ENCODE measurements at regions of chr14 and their contacts with region 1.

Region 1: DNA sequence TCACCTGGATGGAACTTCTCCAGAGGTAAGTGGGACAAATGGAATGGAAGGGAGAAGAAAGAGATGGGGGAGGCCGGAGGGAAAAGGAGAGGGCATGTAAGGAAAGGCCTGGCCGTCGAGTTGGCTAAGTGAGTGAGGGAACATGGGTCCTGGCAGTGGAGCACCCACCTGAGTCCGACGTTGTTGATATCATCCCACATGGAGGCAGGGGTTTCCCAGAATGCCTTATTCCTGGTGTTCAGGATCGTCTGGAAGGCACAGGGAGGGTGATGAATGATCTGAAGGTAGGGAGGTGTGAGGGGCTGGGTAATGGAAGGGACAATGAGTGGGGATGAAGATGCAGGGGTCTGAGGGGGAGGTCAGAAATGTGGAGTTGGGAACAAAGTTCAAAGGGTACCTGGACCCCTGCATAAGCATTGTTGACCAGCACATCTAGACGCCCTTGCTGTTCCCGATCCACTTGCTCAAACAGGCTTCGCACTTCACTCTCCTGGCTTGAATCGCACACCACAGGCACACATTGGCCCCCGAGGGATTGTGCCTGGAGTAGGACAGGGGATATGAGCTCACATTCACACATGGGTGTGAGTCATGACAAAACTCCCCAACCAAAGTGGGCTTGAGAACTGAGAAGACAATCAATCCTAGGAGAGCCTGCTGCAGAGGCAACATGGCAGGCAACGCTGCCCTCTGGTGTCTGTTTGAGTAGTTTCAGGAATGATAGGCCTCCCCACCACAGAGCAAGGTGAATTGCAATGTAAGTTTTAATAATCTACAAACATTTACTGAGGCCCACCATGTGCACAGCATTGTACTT is 3.0 kb downstream of the DHRS1 start:
- DNase-seq: peak; percentile 70
- ATAC-seq: peak; percentile 62

Region 2: GRCh38 chr14:24241829-24242443 is 54.6 kb before region 1 on chr14:
- intact Hi-C with region 1: loop called (anchors 2 kb)
- DNase-seq: peak; percentile 94
- ATAC-seq: peak; percentile 95

Region 3: GRCh38 chr14:24339284-24340151 is 43.0 kb after region 1 on chr14 and contains the start of gene RIPK3:
- intact Hi-C with region 1: no loop called
- DNase-seq: peak; percentile 77
- ATAC-seq: peak; percentile 69
- total RNA-seq, gene RIPK3: 2.9 TPM

Region 4: GRCh38 chr14:25006961-25007795 is 710.6 kb after region 1 on chr14:
- intact Hi-C with region 1: no loop called
- DNase-seq: no peak
- ATAC-seq: peak; percentile 72